ENCODE measurements at regions of chr6 and their contacts with region 1.

Region 1: DNA sequence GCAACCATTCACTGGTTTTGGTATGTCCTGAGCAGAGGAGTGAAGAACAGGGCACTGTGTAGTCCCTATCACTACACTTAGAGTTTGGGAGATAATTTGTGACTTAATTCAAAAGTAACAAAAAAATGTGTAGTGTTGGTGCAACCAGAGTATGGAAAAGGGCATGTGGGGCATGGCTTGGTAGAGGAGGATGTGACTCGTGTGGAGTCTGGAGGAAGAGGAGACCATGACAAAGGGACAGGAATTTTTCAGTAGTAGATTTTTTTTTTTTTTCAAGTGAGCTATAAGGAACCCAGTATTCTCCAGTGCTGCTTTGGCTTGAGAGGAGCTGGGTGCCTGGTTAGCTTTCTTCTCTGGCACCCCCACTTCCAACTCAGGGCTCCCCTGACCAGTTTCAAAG is 5.1 kb downstream of the MTRES1 start:
- DNase-seq: no peak
- H3K4me3 Mint-ChIP-seq: no peak overlapping the region
- H3K27ac Mint-ChIP-seq: peak overlapping the region; percentile 56
- H3K4me1 Mint-ChIP-seq: peaks cover 23% of the 10 kb centered on the region
- H3K27me3 Mint-ChIP-seq: no peaks in the 10 kb centered on the region

Region 2: GRCh38 chr6:106325336-106326178 is 707.6 kb before region 1 on chr6 and contains the start of gene ATG5:
- intact Hi-C with region 1: loop called (anchors 1 kb)
- DNase-seq: peak; percentile 100
- H3K4me3 Mint-ChIP-seq: peak within 1 kb of the TSS; percentile 100
- H3K27ac Mint-ChIP-seq: peak within 1 kb of the TSS; percentile 100
- H3K4me1 Mint-ChIP-seq: peaks cover 37% of the 10 kb centered on the region
- H3K27me3 Mint-ChIP-seq: peaks cover 31% of the 10 kb centered on the region
- total RNA-seq, gene ATG5: 29.5 and 30.7 TPM in 2 replicates

Region 3: DNA sequence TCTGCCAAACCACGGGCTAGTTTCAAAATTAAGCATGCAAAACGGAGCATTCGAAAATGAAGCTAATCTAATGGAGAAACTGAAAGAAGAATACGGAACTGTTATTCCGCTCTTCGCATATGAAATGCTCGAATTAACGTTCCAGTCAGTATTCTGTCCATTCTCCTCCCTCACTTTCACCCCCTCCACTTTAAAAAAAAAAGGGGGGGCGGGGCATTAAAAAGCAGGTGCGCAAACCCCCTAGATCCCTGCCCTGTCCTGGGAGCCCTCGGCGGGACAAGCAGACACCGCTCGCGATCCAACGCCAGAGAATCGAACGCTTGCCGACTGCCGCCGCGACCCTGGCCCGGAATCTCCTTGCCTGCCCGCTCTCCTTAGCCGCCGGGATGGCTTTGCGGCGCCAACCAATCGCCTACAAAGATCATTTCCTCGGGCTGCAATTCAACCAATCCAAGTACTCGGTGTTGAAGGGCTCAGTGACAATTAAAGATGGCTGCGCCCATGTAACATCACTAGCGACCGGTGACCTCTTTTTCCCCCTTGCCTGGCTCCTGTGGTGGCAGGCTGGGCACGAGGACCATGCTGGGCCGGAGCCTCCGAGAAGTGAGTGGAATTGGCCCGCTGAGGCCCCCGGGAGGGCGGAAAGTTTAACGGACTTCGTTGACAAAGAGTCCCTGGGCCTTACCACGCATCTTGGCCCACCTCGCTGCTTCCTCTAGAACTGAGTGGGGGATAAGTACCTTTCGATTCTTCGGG is 403.8 kb before region 1 on chr6 and contains the starts of genes QRSL1 and RTN4IP1:
- intact Hi-C with region 1: loop called (anchors 2 kb)
- DNase-seq: peak; percentile 95
- H3K4me3 Mint-ChIP-seq: peak within 1 kb of the TSS; percentile 92
- H3K27ac Mint-ChIP-seq: peak within 1 kb of the TSS; percentile 97
- H3K4me1 Mint-ChIP-seq: peaks cover 18% of the 10 kb centered on the region
- H3K27me3 Mint-ChIP-seq: no peaks in the 10 kb centered on the region
- total RNA-seq, gene QRSL1: 22.4 and 24.2 TPM in 2 replicates
- total RNA-seq, gene RTN4IP1: 7.2 and 8.0 TPM in 2 replicates

Region 4: DNA sequence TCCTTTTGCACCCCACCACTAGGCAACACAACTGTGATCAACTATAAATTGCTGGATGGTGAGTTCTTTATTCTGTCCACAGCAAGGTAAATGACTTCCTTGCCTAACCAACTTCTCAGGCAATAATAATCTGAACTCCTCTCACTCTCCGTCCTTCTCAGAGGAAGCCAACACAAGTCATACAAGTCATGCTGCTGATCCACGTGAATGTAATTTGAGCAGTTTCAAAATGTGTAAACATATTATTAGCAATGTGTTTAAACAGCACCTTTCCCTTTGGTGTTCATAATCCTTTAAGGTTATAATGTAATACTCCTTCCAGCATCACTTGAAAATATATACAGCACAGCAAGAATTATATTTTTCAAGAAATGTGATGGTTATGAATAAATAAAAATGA is 275.9 kb before region 1 on chr6:
- intact Hi-C with region 1: no loop called
- DNase-seq: no peak
- H3K4me3 Mint-ChIP-seq: no peak overlapping the region
- H3K27ac Mint-ChIP-seq: no peak overlapping the region
- H3K4me1 Mint-ChIP-seq: no peaks in the 10 kb centered on the region
- H3K27me3 Mint-ChIP-seq: no peaks in the 10 kb centered on the region

Region 5: GRCh38 chr6:106870824-106871717 is 162.1 kb before region 1 on chr6:
- intact Hi-C with region 1: no loop called
- DNase-seq: no peak
- H3K4me3 Mint-ChIP-seq: no peak overlapping the region
- H3K27ac Mint-ChIP-seq: no peak overlapping the region
- H3K4me1 Mint-ChIP-seq: no peaks in the 10 kb centered on the region
- H3K27me3 Mint-ChIP-seq: peaks cover 4% of the 10 kb centered on the region

Region 6: GRCh38 chr6:107064579-107065065 is 31.5 kb after region 1 on chr6:
- intact Hi-C with region 1: loop called (anchors 1 kb)
- DNase-seq: peak; percentile 74
- H3K4me3 Mint-ChIP-seq: peak overlapping the region; percentile 41
- H3K27ac Mint-ChIP-seq: peak overlapping the region; percentile 75
- H3K4me1 Mint-ChIP-seq: peaks cover 37% of the 10 kb centered on the region
- H3K27me3 Mint-ChIP-seq: no peaks in the 10 kb centered on the region

Region 7: GRCh38 chr6:107114213-107114905 is 81.2 kb after region 1 on chr6:
- intact Hi-C with region 1: loop called (anchors 1 kb)
- DNase-seq: peak; percentile 93
- H3K4me3 Mint-ChIP-seq: peak overlapping the region; percentile 84
- H3K27ac Mint-ChIP-seq: peak overlapping the region; percentile 77
- H3K4me1 Mint-ChIP-seq: peaks cover 18% of the 10 kb centered on the region
- H3K27me3 Mint-ChIP-seq: peaks cover 20% of the 10 kb centered on the region

Region 8: DNA sequence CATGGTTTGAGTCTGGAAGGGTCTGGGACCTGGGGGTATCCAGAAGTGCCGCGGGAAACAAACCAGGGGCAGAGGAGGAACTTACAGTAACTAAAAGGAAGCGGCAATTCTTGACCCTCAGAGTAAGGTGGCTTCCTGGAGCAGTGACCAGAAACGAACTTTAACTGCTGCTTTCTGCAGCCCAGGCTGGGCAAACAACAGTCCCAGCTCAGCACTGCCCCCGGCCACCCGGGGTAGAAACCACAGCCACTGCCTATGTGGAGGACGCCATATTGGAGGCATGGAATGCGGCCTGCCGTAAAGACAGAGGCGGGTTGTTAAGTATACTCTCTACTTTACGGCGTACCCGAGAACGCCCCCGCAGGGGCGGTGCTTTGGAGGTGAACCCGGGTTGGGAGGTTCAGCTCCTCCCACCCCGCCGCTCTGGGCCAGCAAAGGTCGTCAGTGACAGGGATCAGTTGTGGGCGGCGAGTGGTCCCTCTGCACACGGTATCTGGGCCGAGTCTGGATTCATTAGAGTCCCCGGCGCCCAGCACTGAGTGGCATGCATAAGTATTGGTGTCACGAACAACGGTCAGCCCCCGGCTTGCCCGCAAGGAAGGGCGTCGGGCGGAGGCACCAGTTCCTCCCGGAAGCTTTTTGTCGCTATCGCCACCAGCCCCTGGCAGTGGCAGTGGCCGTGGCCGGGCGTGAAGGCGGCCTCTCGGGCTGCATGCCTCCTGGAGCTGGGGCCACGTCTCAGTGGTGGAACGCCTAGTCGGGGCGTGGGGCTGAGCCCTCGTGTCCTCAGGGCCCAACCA is 426.4 kb after region 1 on chr6 and contains the start of gene PDSS2:
- intact Hi-C with region 1: loop called (anchors 1 kb)
- DNase-seq: peak; percentile 99
- H3K4me3 Mint-ChIP-seq: peak within 1 kb of the TSS; percentile 97
- H3K27ac Mint-ChIP-seq: peak within 1 kb of the TSS; percentile 95
- H3K4me1 Mint-ChIP-seq: peaks cover 21% of the 10 kb centered on the region
- H3K27me3 Mint-ChIP-seq: peaks cover 7% of the 10 kb centered on the region
- total RNA-seq, gene PDSS2: 13.3 and 14.2 TPM in 2 replicates